ENCODE measurements at regions of chr10 and their contacts with region 1.

Region 1: GRCh38 chr10:22666287-22667092 is 47.9 kb downstream of the PIP4K2A start:
- DNase-seq: peak; percentile 74
- H3K4me3 Mint-ChIP-seq: peak overlapping the region; percentile 73
- H3K27ac Mint-ChIP-seq: peak overlapping the region; percentile 74
- H3K4me1 Mint-ChIP-seq: peaks cover 76% of the 10 kb centered on the region
- H3K27me3 Mint-ChIP-seq: no peaks in the 10 kb centered on the region

Region 2: DNA sequence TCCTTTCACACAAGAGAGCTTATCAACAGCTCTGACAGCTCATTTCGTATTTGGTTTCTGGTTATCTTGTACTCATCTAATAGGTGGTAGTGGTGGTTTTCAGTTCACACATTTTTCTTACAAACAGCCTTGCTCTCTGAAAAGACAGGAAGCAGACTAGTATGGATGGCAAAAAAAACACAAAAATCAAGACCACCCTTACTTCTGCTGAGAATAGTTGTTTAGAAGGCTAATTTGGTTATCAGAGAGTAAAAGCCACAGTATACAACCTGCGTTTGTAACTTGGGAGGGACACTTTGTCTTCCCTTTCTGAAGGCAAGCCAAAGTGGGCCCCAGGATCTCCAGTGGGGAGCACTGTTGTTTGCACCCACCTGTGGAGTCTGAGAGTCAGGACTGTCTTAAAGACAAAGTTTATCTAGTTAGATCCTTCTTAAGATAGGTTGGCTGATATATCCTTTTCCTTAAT is 20.1 kb before region 1 on chr10:
- CTCF ChIA-PET with region 1: interaction called, 3 read pairs
- intact Hi-C with region 1: loop called (anchors 1 kb)
- DNase-seq: no peak
- H3K4me3 Mint-ChIP-seq: peak overlapping the region; percentile 30
- H3K27ac Mint-ChIP-seq: peak overlapping the region; percentile 90
- H3K4me1 Mint-ChIP-seq: peaks cover 86% of the 10 kb centered on the region
- H3K27me3 Mint-ChIP-seq: no peaks in the 10 kb centered on the region

Region 3: DNA sequence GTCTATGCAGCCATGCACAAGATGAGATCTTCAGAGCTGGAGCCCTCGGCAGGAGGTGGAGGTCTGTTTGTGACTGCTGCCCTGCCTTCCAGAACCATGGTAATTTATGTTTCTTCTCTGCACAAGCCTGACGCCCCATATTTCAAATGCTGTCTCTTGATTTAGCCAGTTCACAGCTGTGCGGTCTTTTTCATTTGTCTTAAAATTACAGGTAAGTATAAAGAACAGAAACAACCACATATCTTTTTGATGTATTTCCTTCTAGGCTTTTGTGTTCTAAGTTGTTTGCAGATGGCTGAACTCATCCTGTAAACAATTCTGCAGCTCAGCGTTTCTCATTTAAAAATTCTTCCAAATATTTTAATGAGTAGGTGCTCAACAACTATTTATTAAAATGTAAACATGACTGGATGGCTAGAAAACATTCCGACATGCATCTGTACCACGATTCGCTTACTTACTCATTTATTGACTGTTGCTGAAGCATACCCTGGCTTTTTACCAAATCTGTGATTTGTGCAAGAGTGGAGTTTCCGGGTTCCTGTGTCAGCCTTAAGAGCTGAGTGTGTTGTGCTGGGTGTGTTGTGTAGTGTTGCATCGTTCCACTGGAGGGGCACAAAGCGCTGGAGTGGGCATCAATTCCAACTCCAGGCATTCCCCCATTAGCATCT is 11.0 kb before region 1 on chr10:
- CTCF ChIA-PET with region 1: interaction called, 3 read pairs
- intact Hi-C with region 1: loop called (anchors 1 kb)
- DNase-seq: peak; percentile 69
- H3K4me3 Mint-ChIP-seq: peak overlapping the region; percentile 46
- H3K27ac Mint-ChIP-seq: peak overlapping the region; percentile 89
- H3K4me1 Mint-ChIP-seq: peaks cover 99% of the 10 kb centered on the region
- H3K27me3 Mint-ChIP-seq: no peaks in the 10 kb centered on the region

Region 4: GRCh38 chr10:22693371-22693784 is 26.9 kb after region 1 on chr10:
- CTCF ChIA-PET with region 1: interaction called, 5 read pairs
- intact Hi-C with region 1: loop called (anchors 1 kb)
- DNase-seq: peak; percentile 42
- H3K4me3 Mint-ChIP-seq: peak overlapping the region; percentile 25
- H3K27ac Mint-ChIP-seq: peak overlapping the region; percentile 85
- H3K4me1 Mint-ChIP-seq: peaks cover 84% of the 10 kb centered on the region
- H3K27me3 Mint-ChIP-seq: no peaks in the 10 kb centered on the region